HepG2 (cell line): ENCODE measurements at regions of chr4 and their contacts with region 1.

Region 1: DNA sequence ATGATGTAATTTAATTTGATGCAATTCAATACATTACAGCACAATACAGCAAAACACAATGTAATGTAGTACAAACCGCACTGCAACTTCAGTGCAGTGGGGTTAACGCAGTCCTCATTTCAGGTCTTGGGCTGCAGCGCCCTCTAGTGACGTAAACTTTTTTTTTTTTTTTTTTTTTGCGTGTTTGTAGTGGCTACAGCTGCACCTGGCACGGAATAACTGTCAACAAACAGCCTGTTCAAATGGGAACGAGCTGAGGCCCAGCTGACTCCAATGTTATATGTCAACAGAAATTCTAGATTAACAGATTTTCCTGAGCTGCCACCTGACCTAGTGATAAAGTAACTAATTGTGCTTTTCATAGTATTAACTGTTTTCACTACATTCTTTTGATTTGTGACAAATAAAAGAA is 33.5 kb upstream of the RASSF6 start:
- DNase-seq: peak; percentile 45
- ATAC-seq: peak; percentile 90
- H3K4me3 ChIP-seq: no peak overlapping the region
- H3K27ac ChIP-seq: no peak overlapping the region
- H3K4me1 ChIP-seq: peaks cover 1% of the 10 kb centered on the region; the same call in 1 of the 2 replicates
- H3K27me3 ChIP-seq: no peaks in the 10 kb centered on the region
- CTCF ChIP-seq: peak; percentile 73
- EP300 ChIP-seq: no peak
- POLR2A ChIP-seq: no peak
- RAD21 ChIP-seq: peak; percentile 61

Region 2: DNA sequence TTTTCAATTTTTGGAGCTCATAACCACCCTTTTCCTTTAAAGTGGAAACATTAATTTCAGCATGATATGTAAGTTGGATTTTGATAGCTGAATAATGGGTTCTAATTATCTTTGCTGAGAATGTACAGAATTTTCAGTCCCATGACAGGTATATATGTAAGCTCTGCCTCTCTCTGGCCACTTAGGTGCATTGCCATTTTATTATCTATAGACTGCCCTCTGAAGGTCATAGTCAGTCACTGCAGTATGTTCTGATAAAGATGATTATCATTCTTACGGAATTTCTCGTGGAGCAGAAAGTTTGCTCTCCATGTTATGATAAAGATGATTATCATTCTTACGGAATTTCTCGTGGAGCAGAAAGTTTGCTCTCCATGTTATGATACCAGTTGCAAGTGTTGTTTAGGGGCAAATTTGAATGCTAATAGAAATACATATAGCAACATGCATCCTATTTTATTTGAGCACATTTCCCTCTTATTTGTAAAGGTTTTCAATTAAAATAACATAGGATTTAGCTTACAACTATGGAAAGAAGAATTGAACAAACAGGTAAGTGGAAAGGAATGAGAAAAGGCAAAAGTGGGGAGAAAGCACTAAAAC is 207.3 kb before region 1 on chr4:
- CTCF ChIA-PET with region 1: no interaction called
- POLR2A ChIA-PET with region 1: no interaction called
- in situ Hi-C with region 1: no loop called
- intact Hi-C with region 1: loop called (anchors 10 kb)
- DNase-seq: peak; percentile 78
- ATAC-seq: peak; percentile 64
- H3K4me3 ChIP-seq: no peak overlapping the region; a peak in 1 of 6 replicates
- H3K27ac ChIP-seq: peak overlapping the region; percentile 38
- H3K4me1 ChIP-seq: peaks cover 82% of the 10 kb centered on the region
- H3K27me3 ChIP-seq: no peaks in the 10 kb centered on the region
- CTCF ChIP-seq: peak; percentile 75
- EP300 ChIP-seq: no peak
- POLR2A ChIP-seq: peak in 1 of 2 experiments; percentile 39; a peak in 2 of 4 replicates
- RAD21 ChIP-seq: peak; percentile 75

Region 3: GRCh38 chr4:73520821-73521220 is 132.9 kb before region 1 on chr4:
- CTCF ChIA-PET with region 1: no interaction called
- POLR2A ChIA-PET with region 1: no interaction called
- in situ Hi-C with region 1: no loop called
- intact Hi-C with region 1: loop called (anchors 5 kb)
- DNase-seq: no peak
- ATAC-seq: no peak
- H3K4me3 ChIP-seq: no peak overlapping the region
- H3K27ac ChIP-seq: no peak overlapping the region
- H3K4me1 ChIP-seq: peaks cover 10% of the 10 kb centered on the region
- H3K27me3 ChIP-seq: peaks cover 0 to 2% of the 10 kb centered on the region in 2 experiments; a peak in 1 of 5 replicates
- CTCF ChIP-seq: no peak
- EP300 ChIP-seq: no peak
- POLR2A ChIP-seq: no peak
- RAD21 ChIP-seq: no peak

Region 4: GRCh38 chr4:73593631-73594241 is 60.0 kb before region 1 on chr4:
- CTCF ChIA-PET with region 1: interaction called, 40 read pairs
- POLR2A ChIA-PET with region 1: no interaction called
- in situ Hi-C with region 1: loop called (anchors 5 kb)
- intact Hi-C with region 1: loop called (anchors 1 kb)
- DNase-seq: peak; percentile 39
- ATAC-seq: no peak
- H3K4me3 ChIP-seq: no peak overlapping the region
- H3K27ac ChIP-seq: no peak overlapping the region
- H3K4me1 ChIP-seq: peaks cover 41% of the 10 kb centered on the region
- H3K27me3 ChIP-seq: no peaks in the 10 kb centered on the region
- CTCF ChIP-seq: peak; percentile 58
- EP300 ChIP-seq: no peak
- POLR2A ChIP-seq: no peak
- RAD21 ChIP-seq: peak; percentile 45; the same call in 1 of the 2 replicates

Region 5: GRCh38 chr4:73631565-73632226 is 22.0 kb before region 1 on chr4:
- CTCF ChIA-PET with region 1: no interaction called
- POLR2A ChIA-PET with region 1: no interaction called
- in situ Hi-C with region 1: no loop called
- intact Hi-C with region 1: no loop called
- DNase-seq: no peak
- ATAC-seq: peak; percentile 51
- H3K4me3 ChIP-seq: no peak overlapping the region
- H3K27ac ChIP-seq: no peak overlapping the region
- H3K4me1 ChIP-seq: no peaks in the 10 kb centered on the region
- H3K27me3 ChIP-seq: no peaks in the 10 kb centered on the region; a peak in 2 of 5 replicates
- CTCF ChIP-seq: no peak
- EP300 ChIP-seq: no peak
- POLR2A ChIP-seq: no peak
- RAD21 ChIP-seq: no peak

Region 6: GRCh38 chr4:74578329-74578728 is 924.6 kb after region 1 on chr4:
- CTCF ChIA-PET with region 1: no interaction called
- POLR2A ChIA-PET with region 1: no interaction called
- in situ Hi-C with region 1: no loop called
- intact Hi-C with region 1: no loop called
- DNase-seq: no peak
- ATAC-seq: no peak
- H3K4me3 ChIP-seq: no peak overlapping the region
- H3K27ac ChIP-seq: no peak overlapping the region
- H3K4me1 ChIP-seq: peaks cover 6% of the 10 kb centered on the region
- H3K27me3 ChIP-seq: no peaks in the 10 kb centered on the region
- CTCF ChIP-seq: no peak
- EP300 ChIP-seq: no peak
- POLR2A ChIP-seq: no peak
- RAD21 ChIP-seq: no peak